ENCODE measurements at regions of chr17 and their contacts with region 1.

Region 1: GRCh38 chr17:79393358-79394202 is 217.3 kb downstream of the RBFOX3 start:
- DNase-seq: peak; percentile 97
- H3K4me3 ChIP-seq: no peak overlapping the region; a peak in 1 of 4 replicates
- H3K27ac ChIP-seq: no peak overlapping the region
- H3K4me1 ChIP-seq: no peaks in the 10 kb centered on the region; a peak in 1 of 4 replicates
- H3K27me3 ChIP-seq: peaks cover 64% of the 10 kb centered on the region
- CTCF ChIP-seq: peak; percentile 97
- EP300 ChIP-seq: no peak
- RAD21 ChIP-seq: peak; percentile 97

Region 2: GRCh38 chr17:78935379-78936323 is 457.9 kb before region 1 on chr17:
- CTCF ChIA-PET with region 1: no interaction called
- POLR2A ChIA-PET with region 1: no interaction called
- DNase-seq: peak; percentile 97
- H3K4me3 ChIP-seq: peak overlapping the region; percentile 26 to 55
- H3K27ac ChIP-seq: peak overlapping the region; percentile 98
- H3K4me1 ChIP-seq: peaks cover 51% of the 10 kb centered on the region in 2 experiments
- H3K27me3 ChIP-seq: no peaks in the 10 kb centered on the region
- CTCF ChIP-seq: no peak
- EP300 ChIP-seq: peak; percentile 55 to 97
- RAD21 ChIP-seq: peak; percentile 22; the same call in 1 of the 2 replicates

Region 3: DNA sequence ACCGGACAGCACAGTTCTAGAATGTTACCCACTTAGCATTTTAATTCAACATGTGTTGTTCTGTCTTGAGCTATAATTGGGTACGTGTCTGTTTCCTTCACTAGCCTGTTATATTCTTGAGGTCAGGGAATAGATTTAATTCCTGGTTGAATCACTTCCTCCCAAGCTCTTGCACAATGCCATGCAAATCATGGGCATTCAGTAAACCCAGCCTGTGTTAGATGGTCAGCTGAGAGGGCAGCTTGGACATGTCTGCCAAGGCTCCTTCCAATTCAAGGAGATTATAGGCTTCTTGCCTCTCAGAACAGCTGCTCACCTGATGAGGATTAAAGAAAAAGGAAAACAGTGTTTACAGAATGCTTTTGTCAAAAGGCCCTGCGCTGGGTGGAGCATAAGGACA is 357.0 kb before region 1 on chr17:
- CTCF ChIA-PET with region 1: interaction called, 24 read pairs
- POLR2A ChIA-PET with region 1: no interaction called
- DNase-seq: no peak
- H3K4me3 ChIP-seq: no peak overlapping the region
- H3K27ac ChIP-seq: peak overlapping the region; percentile 2 to 47; a peak in 2 of 4 replicates
- H3K4me1 ChIP-seq: peaks cover 10 to 16% of the 10 kb centered on the region in 2 experiments; a peak in 3 of 4 replicates
- H3K27me3 ChIP-seq: no peaks in the 10 kb centered on the region
- CTCF ChIP-seq: no peak
- EP300 ChIP-seq: no peak; a peak in 1 of 4 replicates
- RAD21 ChIP-seq: no peak

Region 4: GRCh38 chr17:79126139-79126538 is 267.4 kb before region 1 on chr17:
- CTCF ChIA-PET with region 1: interaction called, 1,305 read pairs
- POLR2A ChIA-PET with region 1: no interaction called
- DNase-seq: peak; percentile 87
- H3K4me3 ChIP-seq: no peak overlapping the region
- H3K27ac ChIP-seq: no peak overlapping the region
- H3K4me1 ChIP-seq: peaks cover 0 to 17% of the 10 kb centered on the region in 2 experiments; a peak in 1 of 4 replicates
- H3K27me3 ChIP-seq: peaks cover 68% of the 10 kb centered on the region
- CTCF ChIP-seq: peak; percentile 31
- EP300 ChIP-seq: no peak
- RAD21 ChIP-seq: peak; percentile 65

Region 5: DNA sequence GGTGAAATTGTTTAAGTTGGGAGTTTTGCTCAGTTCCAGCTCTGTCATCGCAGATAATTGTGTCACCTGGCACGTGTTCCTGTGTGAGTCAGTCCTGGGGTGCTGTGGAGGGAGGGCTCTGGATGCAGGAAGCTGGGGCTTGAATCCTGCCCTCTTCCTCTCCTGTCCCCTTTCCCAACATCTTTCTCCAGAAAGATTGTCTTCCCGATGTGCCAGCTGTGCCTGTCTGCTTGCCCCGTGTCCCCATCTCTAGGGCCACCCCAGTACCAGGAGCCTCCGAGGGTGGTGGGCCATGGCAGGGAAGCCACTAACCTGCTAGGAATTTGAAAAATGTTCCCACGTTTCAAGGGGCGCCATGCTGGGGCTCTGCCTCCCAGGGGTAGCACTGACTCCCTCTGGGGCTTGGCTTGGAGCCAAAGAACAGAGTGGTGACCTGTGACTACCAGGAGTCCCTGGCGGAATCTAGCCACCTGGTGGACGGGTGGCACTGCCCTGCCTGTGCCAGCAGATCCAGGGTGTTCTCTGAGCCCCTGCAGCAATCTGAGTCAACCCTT is 120.8 kb before region 1 on chr17:
- CTCF ChIA-PET with region 1: interaction called, 149 read pairs
- POLR2A ChIA-PET with region 1: no interaction called
- DNase-seq: peak; percentile 85
- H3K4me3 ChIP-seq: no peak overlapping the region
- H3K27ac ChIP-seq: peak overlapping the region in 1 of 2 experiments; percentile 76; a peak in 2 of 4 replicates
- H3K4me1 ChIP-seq: peaks cover 0 to 47% of the 10 kb centered on the region in 2 experiments; a peak in 1 of 4 replicates
- H3K27me3 ChIP-seq: 0 out of 2 replicates have a peak, but pooled peaks cover 9% of the 10 kb centered on the region
- CTCF ChIP-seq: no peak
- EP300 ChIP-seq: no peak
- RAD21 ChIP-seq: no peak; the same call in 1 of the 2 replicates

Region 6: GRCh38 chr17:79355165-79355564 is 38.4 kb before region 1 on chr17:
- CTCF ChIA-PET with region 1: interaction called, 15 read pairs
- POLR2A ChIA-PET with region 1: no interaction called
- DNase-seq: peak; percentile 61
- H3K4me3 ChIP-seq: no peak overlapping the region
- H3K27ac ChIP-seq: no peak overlapping the region
- H3K4me1 ChIP-seq: no peaks in the 10 kb centered on the region
- H3K27me3 ChIP-seq: peaks cover 51% of the 10 kb centered on the region
- CTCF ChIP-seq: no peak
- EP300 ChIP-seq: no peak
- RAD21 ChIP-seq: no peak

Region 7: GRCh38 chr17:79420318-79421243 is 27.0 kb after region 1 on chr17:
- CTCF ChIA-PET with region 1: interaction called, 25 read pairs
- POLR2A ChIA-PET with region 1: no interaction called
- DNase-seq: no peak
- H3K4me3 ChIP-seq: no peak overlapping the region
- H3K27ac ChIP-seq: no peak overlapping the region
- H3K4me1 ChIP-seq: no peaks in the 10 kb centered on the region; a peak in 1 of 4 replicates
- H3K27me3 ChIP-seq: 0 out of 2 replicates have a peak, but pooled peaks cover 29% of the 10 kb centered on the region
- CTCF ChIP-seq: no peak
- EP300 ChIP-seq: no peak
- RAD21 ChIP-seq: no peak

Region 8: DNA sequence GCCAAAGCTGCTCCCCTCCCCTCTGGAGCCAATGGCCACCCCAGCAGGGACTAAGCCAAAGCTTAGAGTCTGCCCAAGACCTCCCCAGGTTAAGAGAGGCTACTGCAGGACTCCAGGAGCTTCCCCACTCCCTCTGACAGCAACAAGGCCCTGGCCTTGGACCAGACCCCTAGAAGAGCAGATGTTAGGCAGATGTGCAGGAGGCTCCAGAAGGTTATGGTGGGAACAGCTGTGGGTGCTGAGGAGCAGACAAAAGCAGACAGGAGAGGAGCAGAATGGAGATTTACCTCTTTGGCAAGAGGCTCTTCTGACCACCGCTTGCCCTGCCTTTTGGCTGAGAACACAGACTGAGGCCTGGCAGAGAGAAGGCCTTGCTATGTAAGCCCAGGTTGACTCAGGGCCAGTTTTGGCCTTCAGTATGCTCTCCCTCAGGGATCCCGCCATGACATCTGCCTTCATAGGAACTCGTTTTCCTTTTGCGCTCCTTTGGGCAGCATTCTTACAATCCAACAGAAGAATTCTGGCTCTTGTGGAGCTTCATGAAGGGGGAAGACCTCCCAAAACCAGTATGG is 104.3 kb after region 1 on chr17:
- CTCF ChIA-PET with region 1: no interaction called
- POLR2A ChIA-PET with region 1: no interaction called
- DNase-seq: no peak
- H3K4me3 ChIP-seq: no peak overlapping the region
- H3K27ac ChIP-seq: no peak overlapping the region
- H3K4me1 ChIP-seq: peaks cover 0 to 6% of the 10 kb centered on the region in 2 experiments; a peak in 1 of 4 replicates
- H3K27me3 ChIP-seq: no peaks in the 10 kb centered on the region
- CTCF ChIP-seq: no peak
- EP300 ChIP-seq: no peak
- RAD21 ChIP-seq: no peak

Measured in SK-N-SH (cell line).